H1 (cell line): ENCODE measurements at regions of chr2 and their contacts with region 1.

Region 1: DNA sequence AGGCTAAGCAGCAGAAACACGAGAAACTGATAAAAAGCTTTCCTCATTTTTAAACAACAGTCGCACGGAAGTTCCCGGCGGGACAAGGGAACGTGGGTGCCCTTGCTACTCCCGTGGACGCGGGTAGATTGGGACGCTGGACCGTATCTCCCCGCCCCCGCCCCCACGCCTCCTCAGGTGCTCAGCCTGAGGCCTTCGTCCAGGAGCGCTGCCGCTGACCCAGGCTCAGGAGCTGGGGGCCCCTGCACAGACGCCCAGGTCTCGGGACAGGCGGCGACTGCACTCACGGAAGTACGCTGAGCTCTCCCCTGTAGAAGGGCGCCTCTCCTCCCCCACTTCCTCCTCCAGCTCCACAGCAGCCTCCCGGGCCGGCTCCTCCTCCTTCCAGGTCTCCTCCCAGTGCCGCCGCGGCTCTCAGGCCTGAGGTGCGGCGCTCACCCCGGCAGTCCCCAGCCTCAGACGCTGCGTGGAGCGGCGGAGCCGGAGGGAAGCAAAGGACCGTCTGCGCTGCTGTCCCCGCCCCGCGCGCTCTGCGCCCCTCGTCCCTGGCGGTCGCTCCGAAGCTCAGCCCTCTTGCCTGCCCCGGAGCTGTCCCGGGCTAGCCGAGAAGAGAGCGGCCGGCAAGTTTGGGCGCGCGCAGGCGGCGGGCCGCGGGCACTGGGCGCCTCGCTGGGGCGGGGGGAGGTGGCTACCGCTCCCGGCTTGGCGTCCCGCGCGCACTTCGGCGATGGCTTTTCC is at the start of gene ITGAV:
- DNase-seq: peak; percentile 79 to 90
- H3K4me3 ChIP-seq: peak within 1 kb of the TSS; percentile 77 to 96 (median 94)
- H3K27ac ChIP-seq: peak within 1 kb of the TSS; percentile 66
- H3K4me1 ChIP-seq: peaks cover 0 to 4% (median 2%) of the 10 kb centered on the region in 4 experiments; a peak in 4 of 7 replicates
- H3K27me3 ChIP-seq: no peaks in the 10 kb centered on the region
- CTCF ChIP-seq: no peak
- EP300 ChIP-seq: no peak
- POLR2A ChIP-seq: peak; percentile 88 to 93
- RAD21 ChIP-seq: no peak
- total RNA-seq, gene ITGAV: 38.3 and 42.4 TPM in 2 replicates

Region 2: DNA sequence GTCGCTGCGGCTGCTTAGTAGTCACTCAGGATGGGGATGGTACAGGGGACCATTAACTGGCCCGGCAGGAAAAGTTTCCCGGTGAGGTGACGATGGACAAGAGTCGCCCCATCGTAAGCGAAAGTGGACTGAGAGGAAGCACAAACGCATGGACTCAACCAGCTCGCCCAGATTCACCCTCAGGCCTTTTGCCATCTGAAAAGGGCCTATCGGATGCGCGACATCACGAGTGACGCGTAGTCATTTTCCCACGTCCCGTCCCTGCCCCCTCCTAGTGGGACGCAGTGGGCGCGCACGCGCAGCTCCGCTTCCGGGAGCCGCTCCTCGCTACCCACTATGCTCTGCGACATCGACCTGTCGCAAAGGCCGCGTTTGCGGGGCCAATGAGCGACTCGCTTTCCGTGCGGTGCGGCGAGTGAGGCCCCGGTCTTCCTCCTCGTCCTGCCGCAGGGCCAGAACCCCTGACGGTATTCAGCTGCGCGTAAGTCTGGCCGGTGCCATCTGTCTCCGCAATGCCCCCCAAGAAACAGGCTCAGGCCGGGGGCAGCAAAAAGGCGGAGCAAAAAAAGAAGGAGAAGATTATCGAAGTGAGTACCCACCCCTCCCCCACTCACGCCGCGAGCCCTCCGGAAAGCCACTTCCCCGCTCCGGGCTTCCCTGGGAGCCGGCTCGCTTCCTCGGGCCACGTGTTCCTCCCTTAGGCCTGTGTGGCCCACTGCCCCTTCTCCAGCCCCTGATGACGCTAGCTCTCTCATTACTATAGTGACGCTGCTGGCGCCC is 103.7 kb before region 1 on chr2 and contains the start of gene ZC3H15:
- CTCF ChIA-PET with region 1: interaction called, 3 read pairs
- POLR2A ChIA-PET with region 1: interaction called, 15 read pairs
- DNase-seq: peak; percentile 88 to 91
- H3K4me3 ChIP-seq: peak within 1 kb of the TSS; percentile 91 to 99 (median 97)
- H3K27ac ChIP-seq: peak within 1 kb of the TSS; percentile 74
- H3K4me1 ChIP-seq: peaks cover 0 to 3% (median 0%) of the 10 kb centered on the region in 4 experiments; a peak in 4 of 7 replicates
- H3K27me3 ChIP-seq: no peaks in the 10 kb centered on the region
- CTCF ChIP-seq: no peak
- EP300 ChIP-seq: no peak
- POLR2A ChIP-seq: peak; percentile 95 to 96
- RAD21 ChIP-seq: no peak
- total RNA-seq, gene ZC3H15: 76.5 and 80.8 TPM in 2 replicates

Region 3: GRCh38 chr2:186575302-186575701 is 14.5 kb before region 1 on chr2:
- CTCF ChIA-PET with region 1: interaction called, 3 read pairs
- POLR2A ChIA-PET with region 1: interaction called, 11 read pairs
- DNase-seq: no peak
- H3K4me3 ChIP-seq: no peak overlapping the region
- H3K27ac ChIP-seq: no peak overlapping the region
- H3K4me1 ChIP-seq: no peaks in the 10 kb centered on the region; a peak in 1 of 7 replicates
- H3K27me3 ChIP-seq: no peaks in the 10 kb centered on the region
- CTCF ChIP-seq: no peak
- EP300 ChIP-seq: no peak
- POLR2A ChIP-seq: no peak
- RAD21 ChIP-seq: no peak